ENCODE measurements at regions of chr22 and their contacts with region 1.

Region 1: DNA sequence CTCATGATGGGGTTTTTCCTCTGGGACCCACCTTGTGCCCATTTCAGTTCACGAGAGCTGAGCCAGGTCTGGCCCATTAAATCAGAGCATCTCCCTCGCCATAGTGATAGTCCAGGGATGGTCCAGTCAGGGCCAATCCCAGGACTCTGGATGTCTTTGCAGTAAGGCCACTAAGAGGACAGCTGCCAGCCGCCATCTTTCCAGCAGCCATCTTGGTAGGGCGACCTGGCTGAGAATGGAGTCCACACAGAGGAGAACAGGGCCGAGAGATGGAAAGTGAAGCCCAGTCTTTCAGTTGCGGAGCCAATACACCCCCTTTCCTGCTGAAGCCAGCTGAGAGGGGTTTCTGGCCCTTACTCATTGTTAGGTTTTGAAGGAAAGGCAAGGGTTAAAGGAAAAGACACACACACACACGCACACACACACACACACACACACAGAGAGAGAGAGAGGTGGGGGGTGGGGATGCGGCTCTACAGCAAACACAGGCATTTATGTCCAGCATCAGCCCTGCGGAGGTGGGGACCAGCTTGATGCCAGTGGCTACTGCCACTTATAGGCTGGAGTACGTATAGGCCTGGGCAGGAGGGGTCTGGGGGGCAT is 12.4 kb upstream of the KIAA0930 start:
- DNase-seq: no peak
- ATAC-seq: no peak
- H3K4me3 ChIP-seq: no peak overlapping the region
- H3K27ac ChIP-seq: no peak overlapping the region
- H3K4me1 ChIP-seq: no peaks in the 10 kb centered on the region
- H3K27me3 ChIP-seq: no peaks in the 10 kb centered on the region
- CTCF ChIP-seq: no peak

Region 2: DNA sequence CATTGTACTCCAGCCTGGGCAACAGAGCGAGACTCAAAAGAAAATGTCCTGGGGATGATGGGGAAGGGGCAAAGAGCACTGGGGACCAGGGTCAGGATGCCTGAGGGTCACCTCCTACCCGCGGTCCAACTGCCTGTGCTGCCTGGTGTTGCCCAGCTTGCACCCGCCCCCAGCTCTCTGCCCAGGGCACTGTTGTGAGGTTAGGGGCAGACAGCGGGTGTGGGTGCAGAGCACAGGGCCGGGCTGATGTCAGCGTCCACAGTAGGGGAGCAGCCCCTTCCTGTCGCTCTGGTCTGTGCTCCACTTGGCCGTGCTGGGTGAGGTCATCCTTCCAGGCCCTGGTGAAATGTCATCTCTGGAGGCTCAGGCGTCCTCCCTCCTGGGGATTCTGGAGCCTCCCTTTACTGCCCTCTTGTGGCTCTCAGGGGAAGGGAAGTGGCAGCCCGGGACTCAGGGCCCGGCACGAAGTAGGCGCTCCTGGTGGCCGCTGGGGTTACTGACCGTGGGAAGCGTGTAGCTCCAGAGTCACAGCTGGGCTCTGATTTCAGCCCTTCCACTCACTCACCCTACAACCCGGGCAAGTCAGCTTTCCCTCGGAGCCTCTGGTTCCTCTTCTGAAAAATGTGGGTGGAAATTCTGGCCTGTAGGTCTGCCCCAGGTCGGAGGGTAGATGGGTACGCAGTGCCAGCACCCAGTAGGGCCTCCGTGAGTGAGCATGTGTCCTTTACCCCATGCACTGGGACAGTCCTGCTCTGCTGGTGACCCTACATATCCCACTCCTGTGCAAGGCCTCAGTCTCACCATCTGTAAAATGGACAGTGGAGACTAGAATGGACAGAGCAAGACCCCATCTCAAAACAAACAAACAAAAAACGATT is 568.4 kb before region 1 on chr22:
- CTCF ChIA-PET with region 1: no interaction called
- POLR2A ChIA-PET with region 1: no interaction called
- in situ Hi-C with region 1: no loop called
- intact Hi-C with region 1: no loop called
- DNase-seq: peak; percentile 77
- ATAC-seq: peak; percentile 96
- H3K4me3 ChIP-seq: no peak overlapping the region
- H3K27ac ChIP-seq: no peak overlapping the region
- H3K4me1 ChIP-seq: peaks cover 9% of the 10 kb centered on the region; the same call in 1 of the 2 replicates
- H3K27me3 ChIP-seq: no peaks in the 10 kb centered on the region
- CTCF ChIP-seq: peak; percentile 95

Region 3: DNA sequence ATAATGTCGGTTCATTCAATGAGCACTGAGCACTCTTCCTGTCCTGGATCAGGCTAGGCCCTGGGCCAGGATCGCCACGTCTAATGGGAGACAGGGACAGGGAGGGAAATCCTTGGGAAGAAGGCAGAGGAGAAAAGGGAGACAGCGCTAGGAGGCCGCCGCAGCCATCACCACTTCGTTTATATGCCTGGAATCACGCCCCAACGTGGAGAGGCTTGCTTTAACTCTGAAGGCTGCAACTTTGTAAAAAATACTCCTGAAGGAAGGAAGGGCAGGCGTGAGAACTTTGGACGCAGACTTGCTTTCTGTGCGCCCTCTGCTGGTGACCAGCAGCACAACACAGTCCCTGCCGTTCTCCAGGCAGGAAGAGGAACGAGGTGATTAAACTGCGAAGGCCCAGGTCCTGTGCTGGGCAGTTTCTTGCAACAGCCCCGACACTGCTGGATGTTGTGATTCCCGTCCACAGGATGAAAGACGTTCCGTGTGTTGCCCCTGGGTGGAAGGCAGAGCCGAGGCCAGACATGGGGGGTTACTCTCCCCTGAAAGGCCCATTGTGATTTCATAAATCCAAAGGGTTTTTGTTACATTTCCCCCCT is 182.5 kb after region 1 on chr22:
- CTCF ChIA-PET with region 1: no interaction called
- POLR2A ChIA-PET with region 1: no interaction called
- in situ Hi-C with region 1: no loop called
- intact Hi-C with region 1: no loop called
- DNase-seq: peak; percentile 67
- ATAC-seq: peak; percentile 96
- H3K4me3 ChIP-seq: no peak overlapping the region
- H3K27ac ChIP-seq: no peak overlapping the region
- H3K4me1 ChIP-seq: no peaks in the 10 kb centered on the region
- H3K27me3 ChIP-seq: no peaks in the 10 kb centered on the region
- CTCF ChIP-seq: peak; percentile 89

Region 4: GRCh38 chr22:45562073-45562924 is 309.2 kb after region 1 on chr22:
- CTCF ChIA-PET with region 1: no interaction called
- POLR2A ChIA-PET with region 1: interaction called, 11 read pairs
- in situ Hi-C with region 1: no loop called
- intact Hi-C with region 1: no loop called
- DNase-seq: no peak
- ATAC-seq: peak; percentile 17; the same call in 1 of the 2 replicates
- H3K4me3 ChIP-seq: no peak overlapping the region
- H3K27ac ChIP-seq: no peak overlapping the region
- H3K4me1 ChIP-seq: no peaks in the 10 kb centered on the region
- H3K27me3 ChIP-seq: no peaks in the 10 kb centered on the region
- CTCF ChIP-seq: no peak

Measured in Panc1 (cell line).